Activated CD4-positive, alpha-beta T cell treated with anti-CD3 and anti-CD28 coated beads for 36 hours (primary cell): ENCODE measurements at regions of chr2 and their contacts with region 1.

Region 1: GRCh38 chr2:105929516-105929915 is 184.8 kb downstream of the NCK2 start:
- DNase-seq: peak; percentile 73
- ATAC-seq: peak; percentile 72
- H3K4me3 Mint-ChIP-seq: no peak overlapping the region
- H3K27ac Mint-ChIP-seq: peak overlapping the region; percentile 61
- H3K4me1 Mint-ChIP-seq: peaks cover 55% of the 10 kb centered on the region
- H3K27me3 Mint-ChIP-seq: no peaks in the 10 kb centered on the region

Region 2: DNA sequence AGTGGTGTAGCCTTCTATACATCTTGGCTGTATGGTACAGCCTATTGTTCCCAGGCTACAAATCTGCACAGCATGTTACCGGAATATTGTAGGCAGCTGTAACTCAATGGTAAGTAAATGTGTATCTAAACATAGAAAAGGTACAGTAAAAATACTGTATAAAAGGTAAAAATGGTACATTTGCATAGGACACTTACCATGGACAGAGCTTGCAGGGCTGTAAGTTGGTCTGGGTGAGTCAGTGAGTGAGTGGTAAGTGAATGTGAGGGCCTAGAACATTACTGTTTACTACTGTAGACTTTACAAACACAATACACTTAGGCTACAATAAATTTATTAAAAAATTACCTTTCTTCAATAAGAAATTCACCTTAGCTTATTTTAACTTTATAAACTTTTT is 895.3 kb before region 1 on chr2:
- CTCF ChIA-PET with region 1: no interaction called
- POLR2A ChIA-PET with region 1: no interaction called
- intact Hi-C with region 1: no loop called
- DNase-seq: no peak
- ATAC-seq: no peak
- H3K4me3 Mint-ChIP-seq: no peak overlapping the region
- H3K27ac Mint-ChIP-seq: no peak overlapping the region
- H3K4me1 Mint-ChIP-seq: peaks cover 13% of the 10 kb centered on the region
- H3K27me3 Mint-ChIP-seq: no peaks in the 10 kb centered on the region

Region 3: GRCh38 chr2:105576440-105577252 is 352.9 kb before region 1 on chr2:
- CTCF ChIA-PET with region 1: no interaction called
- POLR2A ChIA-PET with region 1: no interaction called
- intact Hi-C with region 1: no loop called
- DNase-seq: no peak
- ATAC-seq: peak; percentile 81
- H3K4me3 Mint-ChIP-seq: no peak overlapping the region
- H3K27ac Mint-ChIP-seq: peak overlapping the region; percentile 89
- H3K4me1 Mint-ChIP-seq: peaks cover 25% of the 10 kb centered on the region
- H3K27me3 Mint-ChIP-seq: no peaks in the 10 kb centered on the region

Region 4: DNA sequence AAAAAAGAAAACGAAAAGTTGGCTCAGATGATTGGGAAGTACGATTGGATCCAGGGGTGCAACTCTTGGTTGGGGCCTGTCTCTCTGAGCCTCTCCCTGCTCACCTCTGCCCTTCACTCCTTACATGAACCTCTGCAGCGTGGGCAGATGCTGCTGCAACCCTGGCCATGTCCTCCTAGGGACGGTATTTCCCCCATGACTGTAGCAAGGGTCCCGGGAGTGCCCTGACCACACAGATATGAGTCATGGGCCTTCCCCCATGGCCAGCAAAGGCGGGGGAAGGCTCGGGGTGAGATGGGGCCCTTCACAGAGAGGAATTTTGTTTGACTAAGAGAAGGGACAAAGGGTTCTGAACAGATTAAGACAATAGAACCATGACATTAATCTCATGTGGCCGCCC is 55.8 kb before region 1 on chr2:
- CTCF ChIA-PET with region 1: no interaction called
- POLR2A ChIA-PET with region 1: no interaction called
- intact Hi-C with region 1: loop called in 1 of 2 experiments (anchors 5 kb)
- DNase-seq: peak; percentile 83
- ATAC-seq: peak; percentile 90
- H3K4me3 Mint-ChIP-seq: peak overlapping the region; percentile 51
- H3K27ac Mint-ChIP-seq: peak overlapping the region; percentile 75
- H3K4me1 Mint-ChIP-seq: peaks cover 99% of the 10 kb centered on the region
- H3K27me3 Mint-ChIP-seq: no peaks in the 10 kb centered on the region